Activated CD4-positive, alpha-beta memory T cell treated with anti-CD3 and anti-CD28 coated beads for 36 hours (primary cell): ENCODE measurements at regions of chr5 and their contacts with region 1.

Region 1: GRCh38 chr5:143008809-143009521 is 238.8 kb downstream of the ARHGAP26 start:
- DNase-seq: peak; percentile 90
- H3K4me3 Mint-ChIP-seq: peak overlapping the region; percentile 31
- H3K27ac Mint-ChIP-seq: peak overlapping the region; percentile 73
- H3K4me1 Mint-ChIP-seq: peaks cover 69% of the 10 kb centered on the region
- H3K27me3 Mint-ChIP-seq: no peaks in the 10 kb centered on the region

Region 2: DNA sequence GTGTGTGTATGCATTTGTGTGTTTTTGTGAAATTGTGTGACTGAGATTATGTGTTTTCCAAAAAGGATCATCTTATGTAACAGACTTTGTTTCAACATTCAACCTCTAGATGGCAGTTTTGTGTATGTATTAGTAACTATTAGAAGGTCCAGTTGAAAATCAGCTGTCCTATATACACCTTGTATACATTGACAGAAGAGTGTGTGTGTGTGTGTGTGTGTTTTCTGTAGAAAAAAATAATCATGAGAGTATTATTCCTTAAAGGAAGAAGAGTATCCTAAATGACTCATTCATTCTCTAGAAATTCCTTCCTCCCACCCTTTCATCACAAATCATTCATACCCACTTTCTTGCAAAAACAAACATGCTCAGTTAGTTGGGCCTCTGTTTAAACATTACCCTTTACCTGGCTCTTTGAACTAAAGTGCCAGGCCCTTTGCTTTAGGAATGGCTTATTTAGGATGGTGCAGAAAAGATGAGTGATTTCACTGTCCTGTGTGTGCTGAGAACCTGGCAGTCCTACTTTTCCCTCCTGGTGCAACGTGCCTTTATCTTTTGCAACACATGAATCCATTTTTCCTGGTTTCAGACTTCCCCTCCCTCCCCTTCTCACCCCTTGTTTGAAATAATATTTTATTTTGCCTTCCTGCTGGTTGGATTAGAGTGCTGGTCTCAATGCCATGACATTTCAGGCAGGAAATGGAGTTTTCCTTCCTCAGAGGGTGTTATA is 86.6 kb before region 1 on chr5:
- CTCF ChIA-PET with region 1: interaction called, 6 read pairs
- POLR2A ChIA-PET with region 1: no interaction called
- intact Hi-C with region 1: loop called (anchors 1 kb)
- DNase-seq: no peak
- H3K4me3 Mint-ChIP-seq: no peak overlapping the region
- H3K27ac Mint-ChIP-seq: no peak overlapping the region
- H3K4me1 Mint-ChIP-seq: peaks cover 28% of the 10 kb centered on the region
- H3K27me3 Mint-ChIP-seq: no peaks in the 10 kb centered on the region

Region 3: DNA sequence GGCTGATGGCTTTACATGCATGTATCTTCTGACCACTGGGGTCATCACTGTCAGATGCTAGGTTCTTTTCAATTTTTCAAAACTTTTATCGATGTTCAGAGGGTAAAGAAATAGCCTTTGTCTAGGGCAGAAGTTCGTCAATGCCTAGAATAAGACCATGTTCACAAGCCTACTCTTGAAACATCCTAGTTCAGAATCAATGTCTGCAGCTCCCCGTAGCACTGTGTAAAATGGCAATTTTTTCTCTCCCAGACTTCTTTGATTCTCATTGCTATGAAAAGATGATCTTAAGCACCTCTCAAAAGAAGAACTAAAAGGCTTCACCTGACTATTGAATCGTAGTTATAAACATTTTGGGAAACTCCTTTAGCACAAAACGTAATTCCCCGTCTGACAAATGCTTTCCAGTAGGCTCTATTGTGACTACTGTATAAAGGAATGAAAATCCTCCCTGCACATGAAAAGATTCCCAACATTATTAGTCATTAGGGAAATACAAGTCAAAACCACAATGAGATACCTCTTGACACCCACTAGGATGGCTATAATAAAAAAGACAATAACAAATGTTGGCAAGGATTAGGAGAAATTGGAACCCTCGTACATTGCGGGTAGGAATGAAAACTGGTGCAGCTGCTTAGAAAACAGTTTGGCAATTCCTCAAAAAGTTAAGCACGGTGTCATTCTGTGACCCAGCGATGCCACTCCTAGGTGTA is 24.7 kb after region 1 on chr5:
- CTCF ChIA-PET with region 1: no interaction called
- POLR2A ChIA-PET with region 1: no interaction called
- intact Hi-C with region 1: loop called (anchors 2 kb)
- DNase-seq: no peak
- H3K4me3 Mint-ChIP-seq: no peak overlapping the region
- H3K27ac Mint-ChIP-seq: no peak overlapping the region
- H3K4me1 Mint-ChIP-seq: peaks cover 58% of the 10 kb centered on the region
- H3K27me3 Mint-ChIP-seq: no peaks in the 10 kb centered on the region

Region 4: GRCh38 chr5:143066556-143067281 is 57.8 kb after region 1 on chr5:
- CTCF ChIA-PET with region 1: no interaction called
- POLR2A ChIA-PET with region 1: interaction called, 3 read pairs
- intact Hi-C with region 1: loop called (anchors 2 kb)
- DNase-seq: peak; percentile 62
- H3K4me3 Mint-ChIP-seq: no peak overlapping the region
- H3K27ac Mint-ChIP-seq: peak overlapping the region; percentile 75
- H3K4me1 Mint-ChIP-seq: peaks cover 37% of the 10 kb centered on the region
- H3K27me3 Mint-ChIP-seq: no peaks in the 10 kb centered on the region

Region 5: GRCh38 chr5:143341807-143342570 is 333.0 kb after region 1 on chr5:
- CTCF ChIA-PET with region 1: no interaction called
- POLR2A ChIA-PET with region 1: no interaction called
- intact Hi-C with region 1: loop called (anchors 1 kb)
- DNase-seq: no peak
- H3K4me3 Mint-ChIP-seq: no peak overlapping the region
- H3K27ac Mint-ChIP-seq: peak overlapping the region; percentile 87
- H3K4me1 Mint-ChIP-seq: peaks cover 52% of the 10 kb centered on the region
- H3K27me3 Mint-ChIP-seq: no peaks in the 10 kb centered on the region

Region 6: GRCh38 chr5:143605403-143606005 is 596.5 kb after region 1 on chr5:
- CTCF ChIA-PET with region 1: no interaction called
- POLR2A ChIA-PET with region 1: interaction called, 3 read pairs
- intact Hi-C with region 1: loop called (anchors 1 kb)
- DNase-seq: peak; percentile 52
- H3K4me3 Mint-ChIP-seq: peak overlapping the region; percentile 28
- H3K27ac Mint-ChIP-seq: peak overlapping the region; percentile 86
- H3K4me1 Mint-ChIP-seq: peaks cover 34% of the 10 kb centered on the region
- H3K27me3 Mint-ChIP-seq: peaks cover 3% of the 10 kb centered on the region

Region 7: DNA sequence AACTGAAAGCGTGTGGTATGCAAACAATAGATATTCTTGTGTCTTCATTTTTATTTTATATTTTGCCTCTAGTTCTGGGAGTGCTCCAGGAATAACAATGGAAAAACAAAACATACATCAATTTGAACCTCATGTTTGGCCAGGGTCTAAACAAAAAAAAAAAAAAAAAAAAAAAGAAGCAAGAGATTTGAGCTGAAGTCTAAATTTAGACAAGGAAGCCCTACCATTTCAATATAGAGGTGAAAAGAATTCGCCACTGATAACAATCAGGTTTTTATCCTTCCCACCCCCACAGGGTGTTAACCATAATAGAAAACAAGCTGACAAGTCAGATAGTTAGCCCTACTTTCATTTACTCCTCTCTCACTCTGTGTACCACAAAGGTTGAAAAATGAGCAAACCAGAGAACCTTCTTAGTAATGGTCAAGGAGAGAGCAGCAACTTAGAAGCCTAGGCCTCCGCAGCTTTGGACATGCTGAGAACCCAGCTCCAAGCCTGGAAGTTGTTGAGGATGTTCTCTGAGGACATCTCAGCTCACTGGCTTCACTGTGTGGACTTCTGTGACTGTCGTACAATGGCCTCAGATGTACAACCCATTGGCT is 684.8 kb after region 1 on chr5:
- CTCF ChIA-PET with region 1: no interaction called
- POLR2A ChIA-PET with region 1: no interaction called
- intact Hi-C with region 1: loop called (anchors 5 kb)
- DNase-seq: peak; percentile 22
- H3K4me3 Mint-ChIP-seq: no peak overlapping the region
- H3K27ac Mint-ChIP-seq: no peak overlapping the region
- H3K4me1 Mint-ChIP-seq: peaks cover 21% of the 10 kb centered on the region
- H3K27me3 Mint-ChIP-seq: peaks cover 4% of the 10 kb centered on the region